AG04449 (cell line): ENCODE measurements at regions of chr17 and their contacts with region 1.

Region 1: GRCh38 chr17:5584383-5585286 is at the start of gene NLRP1:
- DNase-seq: peak; percentile 79
- H3K4me3 ChIP-seq: peak within 1 kb of the TSS; percentile 65
- CTCF ChIP-seq: no peak

Region 2: DNA sequence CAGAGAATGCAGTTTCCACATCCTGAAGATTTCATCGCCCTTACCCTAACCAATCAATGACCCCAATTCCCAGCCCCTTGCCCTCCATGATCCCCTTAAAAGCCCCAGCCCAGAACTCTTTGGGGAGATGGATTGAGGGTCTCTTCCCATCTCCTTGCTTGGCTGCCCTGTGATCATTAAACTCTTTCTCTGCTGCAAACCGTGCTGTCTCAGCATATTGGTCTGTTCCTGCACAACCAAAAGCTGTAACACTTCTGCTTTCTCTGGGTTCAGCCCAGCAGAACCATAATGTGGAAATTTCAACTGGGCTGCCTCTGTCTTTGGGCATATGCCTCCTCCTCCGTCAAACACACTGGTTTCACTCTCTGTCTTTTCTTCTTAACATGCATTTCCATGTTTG is 66.7 kb after region 1 on chr17:
- CTCF ChIA-PET with region 1: no interaction called
- POLR2A ChIA-PET with region 1: no interaction called
- DNase-seq: no peak
- H3K4me3 ChIP-seq: no peak overlapping the region
- CTCF ChIP-seq: no peak

Region 3: DNA sequence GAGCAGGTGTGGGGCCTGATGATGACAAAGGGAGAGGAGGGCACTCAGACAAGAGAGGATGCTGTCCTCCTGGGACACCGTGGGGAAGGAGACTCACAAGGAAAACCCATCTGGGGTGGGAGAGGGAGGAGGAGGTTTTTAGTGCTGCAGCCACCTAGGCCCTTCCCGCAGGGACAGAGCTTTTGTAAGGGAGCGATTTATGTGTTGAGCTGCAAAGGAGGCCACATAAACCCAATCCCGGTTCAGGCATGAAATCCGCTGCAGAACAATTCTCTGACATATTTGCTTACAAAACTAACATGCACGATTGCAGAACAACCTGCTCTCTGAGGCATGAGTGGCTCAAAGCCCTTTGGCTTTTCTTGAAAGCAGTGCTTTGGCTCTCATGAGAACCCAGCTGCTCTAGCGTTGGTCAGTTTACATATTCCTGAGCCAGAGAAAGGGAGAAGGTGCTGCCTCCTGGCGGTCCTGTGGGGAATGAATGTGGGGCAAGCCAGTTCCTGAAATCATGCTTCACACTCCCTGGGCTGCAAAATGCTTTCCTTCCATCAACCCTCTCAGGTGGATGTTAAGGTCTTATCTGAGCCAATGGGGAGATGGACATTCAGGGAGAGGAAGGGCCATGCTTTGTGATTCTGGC is 122.1 kb after region 1 on chr17:
- CTCF ChIA-PET with region 1: interaction called, 24 read pairs
- POLR2A ChIA-PET with region 1: no interaction called
- DNase-seq: peak; percentile 10
- H3K4me3 ChIP-seq: no peak overlapping the region
- CTCF ChIP-seq: peak; percentile 92

Region 4: GRCh38 chr17:6421700-6422604 is 837.3 kb after region 1 on chr17:
- CTCF ChIA-PET with region 1: interaction called, 280 read pairs
- POLR2A ChIA-PET with region 1: no interaction called
- DNase-seq: no peak
- H3K4me3 ChIP-seq: no peak overlapping the region
- CTCF ChIP-seq: peak; percentile 85

Region 5: GRCh38 chr17:6427279-6427781 is 842.7 kb after region 1 on chr17:
- CTCF ChIA-PET with region 1: interaction called, 280 read pairs
- POLR2A ChIA-PET with region 1: no interaction called
- DNase-seq: no peak
- H3K4me3 ChIP-seq: no peak overlapping the region
- CTCF ChIP-seq: no peak

Region 6: GRCh38 chr17:6435968-6436367 is 851.3 kb after region 1 on chr17:
- CTCF ChIA-PET with region 1: interaction called, 26 read pairs
- POLR2A ChIA-PET with region 1: interaction called, 4 read pairs
- DNase-seq: no peak
- H3K4me3 ChIP-seq: no peak overlapping the region
- CTCF ChIP-seq: peak; percentile 87